OCI-LY7 (cell line): ENCODE measurements at regions of chr11 and their contacts with region 1.

Region 1: DNA sequence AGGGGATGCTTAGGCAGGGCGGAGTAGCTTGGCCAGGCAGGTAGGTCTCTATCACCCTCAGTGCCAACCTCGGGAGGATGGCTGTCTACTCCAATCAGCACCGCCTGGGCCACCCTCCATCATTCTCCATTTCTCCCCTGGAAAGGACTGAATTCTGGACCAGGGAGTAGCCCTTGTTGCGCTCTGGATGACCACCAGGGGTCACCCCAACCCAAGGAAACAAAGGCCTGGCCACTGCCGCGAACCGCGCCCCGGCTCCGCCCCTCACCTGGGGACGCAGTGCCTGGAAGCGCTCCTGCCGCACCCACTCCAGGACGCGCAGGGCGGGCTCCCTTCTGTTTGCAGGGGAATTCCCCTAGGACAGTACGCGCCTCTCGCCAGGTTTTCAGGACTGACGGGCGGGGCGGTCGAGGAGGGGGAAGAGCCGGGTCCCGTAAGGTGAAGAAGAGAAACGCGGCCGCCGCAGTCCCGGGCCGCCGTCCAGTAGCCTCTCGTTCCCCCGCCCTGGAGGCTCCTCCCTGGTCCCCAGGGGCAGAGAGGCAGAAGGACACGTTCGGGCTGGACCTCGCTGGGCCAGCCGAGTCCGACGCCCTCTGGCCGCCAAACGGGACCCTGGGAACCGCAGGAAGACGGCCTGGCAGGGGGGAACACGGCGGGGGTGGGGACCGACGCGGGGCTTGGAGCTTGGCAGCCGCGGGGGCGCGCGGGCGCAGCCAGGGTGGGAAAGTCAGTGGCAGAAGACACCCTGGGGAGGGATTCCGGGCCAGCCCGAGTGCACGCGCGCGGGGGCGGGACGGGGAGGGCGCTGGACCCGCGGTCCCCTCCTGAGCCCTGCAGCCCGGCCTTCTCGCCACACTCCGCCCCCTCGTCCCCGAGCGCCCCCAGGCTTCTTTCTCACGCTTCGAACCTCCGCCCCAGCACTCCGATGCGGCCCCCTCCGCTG is 7.1 kb downstream of the SCN4B start:
- DNase-seq: peak; percentile 84
- H3K4me3 ChIP-seq: peak overlapping the region; percentile 63
- H3K27ac ChIP-seq: no peak overlapping the region
- H3K4me1 ChIP-seq: no peaks in the 10 kb centered on the region
- CTCF ChIP-seq: peak; percentile 86

Region 2: DNA sequence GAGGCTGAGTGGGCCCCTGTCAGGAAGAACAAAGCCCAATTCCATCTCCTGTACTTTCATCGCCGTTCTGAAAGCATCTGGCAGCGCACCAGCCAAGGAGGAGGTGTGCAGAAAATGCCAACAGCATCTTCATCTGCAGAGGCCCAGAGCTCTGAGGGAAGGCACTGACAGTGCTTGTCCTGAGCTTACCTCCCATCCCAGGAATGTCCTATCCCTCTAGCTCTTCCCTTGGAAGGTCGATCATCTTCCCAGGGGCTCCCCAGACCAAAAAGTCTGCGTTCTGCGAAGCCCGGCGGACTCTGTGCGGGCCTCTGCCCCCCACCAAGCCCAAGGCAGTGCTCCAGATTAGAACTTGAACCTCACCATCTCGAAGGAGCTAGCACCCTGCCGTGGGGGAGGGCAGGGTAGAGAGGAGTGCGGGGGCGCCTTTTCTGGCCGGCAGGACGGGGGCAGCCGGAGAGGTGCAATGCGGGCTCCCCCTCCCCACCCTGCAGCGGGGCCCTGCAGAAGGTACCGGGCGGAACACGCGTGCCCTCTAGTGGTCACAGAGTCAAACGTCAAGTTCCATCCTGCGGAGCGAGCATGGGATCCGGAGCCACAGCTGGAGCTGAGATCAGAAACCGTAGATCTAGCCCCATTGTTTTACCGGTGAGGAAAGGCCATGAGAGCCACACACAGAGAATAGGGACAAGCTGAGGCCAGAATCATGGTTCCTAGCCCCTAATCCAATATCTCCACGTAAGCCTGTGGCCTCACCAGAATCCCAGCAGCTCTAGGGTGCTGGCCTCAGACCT is 25.9 kb after region 1 on chr11:
- CTCF ChIA-PET with region 1: interaction called, 5 read pairs
- POLR2A ChIA-PET with region 1: interaction called, 4 read pairs
- intact Hi-C with region 1: loop called (anchors 1 kb)
- DNase-seq: peak; percentile 76
- H3K4me3 ChIP-seq: no peak overlapping the region
- H3K27ac ChIP-seq: no peak overlapping the region
- H3K4me1 ChIP-seq: peaks cover 8% of the 10 kb centered on the region
- CTCF ChIP-seq: peak; percentile 89

Region 3: DNA sequence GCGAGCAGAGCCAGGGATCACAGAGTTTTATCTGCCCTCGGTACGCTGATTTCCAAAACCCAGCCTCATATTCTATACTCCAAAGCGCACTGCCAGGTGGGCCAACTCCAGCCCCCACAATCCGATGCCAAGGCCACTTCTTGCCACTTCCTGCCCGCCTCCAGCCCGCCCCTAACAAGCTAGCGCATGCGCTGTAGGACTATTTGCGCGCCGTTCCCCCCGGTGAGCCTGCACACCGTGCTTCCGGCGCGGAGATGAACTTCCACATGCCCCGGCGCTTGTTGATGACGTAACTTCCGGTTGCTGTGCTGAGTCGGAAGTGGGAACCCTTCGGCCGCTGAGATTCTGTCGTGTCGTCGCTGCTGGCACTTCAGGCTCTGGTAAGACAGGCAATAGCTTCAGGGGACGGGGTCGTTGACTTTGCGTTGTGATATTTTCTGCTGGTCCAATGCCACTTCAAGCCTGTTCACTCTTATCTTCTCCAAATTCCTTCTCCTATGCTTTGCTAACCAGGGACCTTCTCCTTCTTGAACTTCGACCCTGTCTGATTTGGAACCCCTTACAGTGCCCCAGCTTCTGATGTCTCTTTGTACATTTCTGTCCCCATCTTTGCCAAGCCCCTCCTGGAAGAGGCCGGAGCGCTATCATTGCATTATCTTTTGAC is 213.9 kb after region 1 on chr11 and contains the start of gene UBE4A:
- CTCF ChIA-PET with region 1: no interaction called
- POLR2A ChIA-PET with region 1: no interaction called
- intact Hi-C with region 1: loop called (anchors 1 kb)
- DNase-seq: peak; percentile 99
- H3K4me3 ChIP-seq: peak within 1 kb of the TSS; percentile 97
- H3K27ac ChIP-seq: peak within 1 kb of the TSS; percentile 39
- H3K4me1 ChIP-seq: peaks cover 21% of the 10 kb centered on the region
- CTCF ChIP-seq: no peak
- total RNA-seq, gene UBE4A: 24.1 and 28.0 TPM in 2 replicates

Region 4: DNA sequence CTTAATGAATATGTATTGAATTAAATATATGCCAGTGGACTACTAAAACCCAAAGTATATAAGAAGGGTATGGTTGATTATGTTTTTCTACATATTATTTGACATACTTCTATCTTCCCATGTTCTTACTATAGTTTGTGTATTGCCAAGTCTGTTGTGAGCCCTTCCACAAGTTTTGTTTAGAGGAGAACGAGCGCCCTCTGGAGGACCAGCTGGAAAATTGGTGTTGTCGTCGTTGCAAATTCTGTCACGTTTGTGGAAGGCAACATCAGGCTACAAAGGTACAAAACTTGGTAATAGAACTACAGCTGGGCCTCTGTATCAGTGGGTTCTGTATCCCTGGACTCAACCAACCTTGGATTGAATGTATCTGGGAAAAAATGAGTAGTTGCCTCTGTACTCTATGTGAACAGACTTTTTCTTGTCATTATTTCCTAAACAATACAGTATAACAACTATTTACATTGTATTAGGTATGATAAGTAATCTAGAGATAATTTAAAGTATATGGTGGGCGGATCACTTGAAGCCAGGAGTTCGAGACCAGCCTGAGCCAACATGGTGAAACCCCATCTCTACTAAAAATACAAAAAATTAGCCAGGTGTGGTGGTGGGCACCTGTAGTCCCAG is 343.0 kb after region 1 on chr11:
- CTCF ChIA-PET with region 1: no interaction called
- POLR2A ChIA-PET with region 1: no interaction called
- intact Hi-C with region 1: loop called (anchors 1 kb)
- DNase-seq: peak; percentile 79
- H3K4me3 ChIP-seq: no peak overlapping the region
- H3K27ac ChIP-seq: no peak overlapping the region
- H3K4me1 ChIP-seq: no peaks in the 10 kb centered on the region
- CTCF ChIP-seq: peak; percentile 99

Region 5: GRCh38 chr11:118619444-118620197 is 474.1 kb after region 1 on chr11:
- CTCF ChIA-PET with region 1: no interaction called
- POLR2A ChIA-PET with region 1: no interaction called
- intact Hi-C with region 1: loop called (anchors 5 kb)
- DNase-seq: no peak
- H3K4me3 ChIP-seq: no peak overlapping the region
- H3K27ac ChIP-seq: no peak overlapping the region
- H3K4me1 ChIP-seq: no peaks in the 10 kb centered on the region
- CTCF ChIP-seq: no peak